MCF 10A (cell line): ENCODE measurements at regions of chrX and their contacts with region 1.

Region 1: DNA sequence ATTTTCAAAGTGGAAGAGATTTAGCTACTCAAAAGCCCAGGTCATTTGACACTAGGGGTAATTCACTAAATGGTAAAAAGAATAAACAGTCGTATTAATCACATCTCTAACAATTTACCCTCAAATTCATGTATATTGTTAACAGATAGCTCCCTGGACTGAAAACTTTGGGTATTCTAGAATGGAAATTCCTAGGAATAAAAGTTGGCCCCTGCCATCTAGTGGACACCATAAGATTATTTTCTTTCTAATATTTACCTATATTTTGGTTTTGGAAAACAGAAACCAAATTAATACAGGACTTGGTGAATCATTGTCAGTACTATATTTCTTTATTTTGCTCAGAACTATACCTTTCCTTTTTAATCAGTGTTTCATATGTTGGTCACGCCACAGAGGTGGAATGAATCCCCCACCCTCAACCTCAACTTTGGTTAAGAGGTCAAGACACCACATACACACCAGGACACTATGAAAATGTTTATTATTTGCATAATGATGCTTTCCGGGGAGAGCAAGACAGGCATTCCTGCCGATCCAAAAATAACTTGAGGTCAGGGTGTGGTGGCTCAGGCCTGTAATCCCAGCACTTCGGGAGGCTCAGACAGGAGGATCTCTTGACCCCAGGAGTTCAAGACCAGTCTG is 96.2 kb upstream of the APOOL start:
- DNase-seq: peak; percentile 33
- H3K4me3 Mint-ChIP-seq: no peak overlapping the region
- H3K27ac Mint-ChIP-seq: peak overlapping the region; percentile 35
- H3K4me1 Mint-ChIP-seq: no peaks in the 10 kb centered on the region
- H3K27me3 Mint-ChIP-seq: no peaks in the 10 kb centered on the region
- CTCF ChIP-seq: peak; percentile 25

Region 2: DNA sequence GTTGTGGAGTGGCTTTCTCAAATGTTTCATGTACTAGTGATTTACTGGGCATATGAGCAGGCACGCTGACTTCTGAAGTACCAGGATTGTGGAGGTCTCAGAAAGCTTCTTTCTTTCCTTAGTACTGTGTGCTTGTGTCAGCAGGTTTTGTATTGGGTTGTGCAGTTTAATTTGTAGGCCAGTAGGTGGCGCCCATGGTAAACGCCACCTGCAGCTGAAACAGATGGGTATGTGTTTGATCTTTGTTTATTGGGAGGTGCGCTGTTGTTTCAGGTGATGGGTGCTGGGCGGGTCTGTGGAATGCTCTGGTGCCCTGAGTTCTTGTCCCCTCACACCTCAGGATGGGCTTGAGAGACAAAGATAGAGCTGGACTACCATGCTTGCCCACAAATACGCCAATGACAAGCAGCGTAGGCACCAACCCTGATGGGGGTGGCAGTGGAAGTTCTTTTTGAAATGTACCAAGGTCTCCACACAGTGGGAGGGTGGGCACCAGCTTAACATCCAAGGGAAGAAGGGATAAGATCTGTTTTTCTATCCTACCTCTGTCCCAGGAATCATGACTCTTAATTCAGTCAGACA is 861.0 kb before region 1 on chrX:
- CTCF ChIA-PET with region 1: interaction called, 11 read pairs
- POLR2A ChIA-PET with region 1: no interaction called
- intact Hi-C with region 1: loop called (anchors 2 kb)
- DNase-seq: peak; percentile 48
- H3K4me3 Mint-ChIP-seq: no peak overlapping the region
- H3K27ac Mint-ChIP-seq: no peak overlapping the region
- H3K4me1 Mint-ChIP-seq: no peaks in the 10 kb centered on the region
- H3K27me3 Mint-ChIP-seq: no peaks in the 10 kb centered on the region
- CTCF ChIP-seq: peak; percentile 82

Region 3: GRCh38 chrX:84729809-84730208 is 177.6 kb before region 1 on chrX:
- CTCF ChIA-PET with region 1: interaction called, 60 read pairs
- POLR2A ChIA-PET with region 1: no interaction called
- intact Hi-C with region 1: loop called (anchors 1 kb)
- DNase-seq: peak; percentile 43
- H3K4me3 Mint-ChIP-seq: no peak overlapping the region
- H3K27ac Mint-ChIP-seq: no peak overlapping the region
- H3K4me1 Mint-ChIP-seq: no peaks in the 10 kb centered on the region
- H3K27me3 Mint-ChIP-seq: no peaks in the 10 kb centered on the region
- CTCF ChIP-seq: peak; percentile 84

Region 4: DNA sequence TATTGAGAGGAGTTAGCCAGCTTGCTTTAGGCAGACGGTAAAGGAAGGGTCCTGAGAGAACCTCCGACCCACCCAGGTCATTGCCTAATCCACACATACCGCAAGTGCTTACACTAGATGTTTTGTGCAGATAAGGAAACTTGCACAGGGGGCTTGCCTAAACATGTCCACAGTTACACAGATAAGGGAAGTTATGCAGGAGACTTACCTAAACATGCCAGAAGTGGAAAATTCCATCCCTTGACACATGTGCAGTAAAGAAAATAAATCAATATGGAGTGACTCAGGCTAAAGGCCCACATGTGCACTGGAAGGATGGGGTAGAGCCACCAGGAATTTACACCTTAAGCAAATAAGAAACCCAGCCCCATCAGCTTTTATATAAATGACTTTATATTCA is 172.4 kb before region 1 on chrX:
- CTCF ChIA-PET with region 1: interaction called, 60 read pairs
- POLR2A ChIA-PET with region 1: no interaction called
- intact Hi-C with region 1: no loop called
- DNase-seq: peak; percentile 10
- H3K4me3 Mint-ChIP-seq: no peak overlapping the region
- H3K27ac Mint-ChIP-seq: peak overlapping the region; percentile 9
- H3K4me1 Mint-ChIP-seq: no peaks in the 10 kb centered on the region
- H3K27me3 Mint-ChIP-seq: peaks cover 17% of the 10 kb centered on the region
- CTCF ChIP-seq: no peak

Region 5: GRCh38 chrX:85111347-85111746 is 203.9 kb after region 1 on chrX:
- CTCF ChIA-PET with region 1: no interaction called
- POLR2A ChIA-PET with region 1: no interaction called
- intact Hi-C with region 1: no loop called
- DNase-seq: peak; percentile 30
- H3K4me3 Mint-ChIP-seq: no peak overlapping the region
- H3K27ac Mint-ChIP-seq: no peak overlapping the region
- H3K4me1 Mint-ChIP-seq: no peaks in the 10 kb centered on the region
- H3K27me3 Mint-ChIP-seq: no peaks in the 10 kb centered on the region
- CTCF ChIP-seq: peak; percentile 59